Esophagus squamous epithelium (tissue), 5 donors: ENCODE measurements at regions of chr4 and their contacts with region 1.

Region 1: DNA sequence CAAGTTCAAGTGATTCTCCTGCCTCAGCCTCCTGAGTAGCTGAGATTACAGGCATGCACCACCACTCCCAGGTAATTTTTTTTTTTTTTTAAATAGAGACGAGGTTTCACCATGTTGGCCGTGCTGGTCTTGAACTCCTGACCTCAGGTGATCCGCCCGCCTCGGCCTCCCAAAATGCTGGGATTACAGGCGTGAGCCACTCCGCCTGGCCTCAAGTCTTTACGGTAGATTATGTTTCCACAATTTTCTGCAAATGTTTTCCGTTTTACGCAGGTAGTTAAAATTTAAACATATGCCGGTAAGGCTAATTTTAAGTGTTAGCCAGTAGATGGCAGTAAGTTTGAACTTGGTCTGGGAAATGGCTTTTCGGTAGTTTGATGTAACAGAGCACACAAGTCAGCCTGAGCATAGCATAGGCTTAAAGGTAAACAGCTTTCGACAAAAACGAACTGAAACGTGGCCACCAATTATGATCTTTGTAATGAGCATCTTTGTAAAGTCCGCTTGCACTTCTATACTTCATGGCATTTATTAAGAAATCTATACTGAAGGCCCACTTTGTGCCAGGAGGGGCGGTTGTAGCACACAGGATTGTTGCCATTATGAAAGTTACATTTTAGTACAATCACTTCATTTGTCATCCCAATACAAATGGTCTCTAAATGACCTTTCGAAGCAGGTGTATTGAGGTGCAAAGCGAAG is 31.1 kb downstream of the CCKAR start:
- DNase-seq: no peak
- H3K4me3 ChIP-seq: no peak overlapping the region
- H3K27ac ChIP-seq: no peak overlapping the region
- H3K4me1 ChIP-seq: peaks cover 0 to 5% (median 0%) of the 10 kb centered on the region in 3 donors
- H3K27me3 ChIP-seq: peaks cover 0 to 5% (median 0%) of the 10 kb centered on the region in 4 donors
- CTCF ChIP-seq: peak in 5 of 6 experiments; percentile 39 to 65 (median 44)
- POLR2A ChIP-seq: no peak

Region 2: DNA sequence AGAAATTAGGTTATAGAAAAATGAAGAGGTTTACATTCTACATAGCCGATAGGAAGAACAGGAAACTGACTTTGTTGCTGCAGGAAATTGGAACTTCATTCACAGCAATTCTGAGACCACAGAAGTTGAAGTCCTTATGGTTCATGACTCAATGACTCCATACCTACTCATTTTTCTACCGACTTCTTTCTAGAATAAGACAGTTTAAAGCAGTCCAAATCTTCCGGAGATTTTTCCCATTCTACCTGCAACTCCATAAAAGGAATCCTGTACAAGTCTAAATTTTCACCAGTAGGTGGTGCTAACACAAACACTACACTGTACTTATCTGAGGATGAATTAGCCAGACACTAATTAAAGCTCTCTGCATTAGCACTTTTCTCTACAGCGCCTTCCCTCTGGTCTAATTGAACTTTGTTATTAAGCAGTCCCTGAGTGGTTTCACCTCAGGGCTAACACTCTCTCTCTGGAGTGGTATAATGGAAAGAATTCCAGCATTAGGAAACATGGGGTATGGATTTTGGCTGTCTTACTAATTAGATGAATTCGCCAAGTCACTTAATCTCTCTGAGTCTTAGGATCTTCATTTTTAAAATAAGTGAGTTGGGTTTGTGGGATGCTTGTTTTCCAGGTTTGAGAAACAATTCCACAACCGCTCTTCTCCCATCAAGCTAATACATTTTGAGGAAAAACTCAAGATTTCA is 377.3 kb before region 1 on chr4:
- intact Hi-C with region 1: no loop called
- DNase-seq: no peak
- H3K4me3 ChIP-seq: no peak overlapping the region
- H3K27ac ChIP-seq: no peak overlapping the region
- H3K4me1 ChIP-seq: peaks cover 0 to 39% (median 30%) of the 10 kb centered on the region in 3 donors
- H3K27me3 ChIP-seq: peaks cover 0 to 67% (median 0%) of the 10 kb centered on the region in 4 donors
- CTCF ChIP-seq: peak; percentile 48 to 80 (median 67)
- POLR2A ChIP-seq: no peak

Region 3: GRCh38 chr4:26719954-26720552 is 260.8 kb after region 1 on chr4:
- intact Hi-C with region 1: loop called (anchors 10 kb)
- DNase-seq: no peak
- H3K4me3 ChIP-seq: no peak overlapping the region
- H3K27ac ChIP-seq: no peak overlapping the region
- H3K4me1 ChIP-seq: no peaks in the 10 kb centered on the region
- H3K27me3 ChIP-seq: no peaks in the 10 kb centered on the region
- CTCF ChIP-seq: peak in 4 of 6 experiments; percentile 43 to 63 (median 47)
- POLR2A ChIP-seq: no peak

Region 4: GRCh38 chr4:27000820-27001219 is 541.6 kb after region 1 on chr4:
- intact Hi-C with region 1: loop called (anchors 10 kb)
- DNase-seq: no peak
- H3K4me3 ChIP-seq: no peak overlapping the region
- H3K27ac ChIP-seq: no peak overlapping the region
- H3K4me1 ChIP-seq: no peaks in the 10 kb centered on the region
- H3K27me3 ChIP-seq: no peaks in the 10 kb centered on the region
- CTCF ChIP-seq: peak in 4 of 6 experiments; percentile 15 to 43 (median 24)
- POLR2A ChIP-seq: no peak